ENCODE measurements at regions of chr4 and their contacts with region 1.

Region 1: GRCh38 chr4:24488399-24489164 is 95.8 kb downstream of the DHX15 start:
- ATAC-seq: peak; percentile 40 to 100 (median 80)
- H3K4me3 ChIP-seq: no peak overlapping the region
- H3K27ac ChIP-seq: no peak overlapping the region
- H3K4me1 ChIP-seq: no peaks in the 10 kb centered on the region

Region 2: GRCh38 chr4:24594891-24595290 is 106.3 kb after region 1 on chr4:
- in situ Hi-C with region 1: no loop called
- ATAC-seq: peak in 4 of 8 experiments; percentile 53 to 98 (median 81)
- H3K4me3 ChIP-seq: no peak overlapping the region
- H3K27ac ChIP-seq: no peak overlapping the region
- H3K4me1 ChIP-seq: no peaks in the 10 kb centered on the region

Region 3: DNA sequence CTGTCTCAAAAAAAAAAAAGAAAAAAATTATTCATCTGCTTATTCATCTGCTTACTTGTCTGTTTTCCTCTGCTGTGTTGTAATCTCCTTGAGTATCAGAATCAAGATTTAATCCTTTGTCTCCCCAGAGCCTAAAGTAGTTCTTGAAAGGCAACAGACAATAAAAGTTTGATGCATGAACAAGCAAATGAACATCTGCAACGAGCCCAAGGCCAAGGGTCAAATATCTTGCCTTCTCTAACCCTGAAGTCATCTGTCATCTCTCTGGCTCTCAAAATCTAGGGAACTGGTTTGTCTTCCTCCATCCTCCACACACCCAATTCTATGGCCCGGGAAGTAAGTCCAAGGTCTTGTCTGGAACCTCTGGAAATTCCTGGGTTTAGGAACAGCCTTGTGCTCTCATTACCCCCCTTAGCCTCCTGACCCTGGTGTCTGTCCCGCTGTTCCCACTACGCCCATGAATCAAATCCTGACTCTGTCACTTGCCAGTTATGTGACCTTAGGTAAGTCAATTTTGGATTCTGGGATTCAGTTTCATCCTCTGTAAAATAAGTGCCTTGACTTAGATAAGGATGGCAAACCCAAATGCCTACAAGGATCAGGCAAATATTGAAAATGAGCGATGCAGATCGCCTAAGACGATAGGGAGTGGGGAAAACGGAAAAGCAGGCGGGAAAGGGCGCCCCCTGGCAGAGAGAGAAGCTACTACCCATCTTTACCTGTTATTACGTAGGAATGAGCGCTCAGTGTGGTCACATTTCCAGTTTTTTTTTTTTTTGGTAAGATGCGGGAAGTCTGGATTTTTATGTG is 198.5 kb after region 1 on chr4:
- in situ Hi-C with region 1: loop called in 1 of 9 experiments (anchors 25 kb)
- ATAC-seq: peak in 2 of 8 experiments; percentile 50 to 85
- H3K4me3 ChIP-seq: no peak overlapping the region
- H3K27ac ChIP-seq: no peak overlapping the region
- H3K4me1 ChIP-seq: no peaks in the 10 kb centered on the region

Region 4: GRCh38 chr4:24980064-24980690 is 491.6 kb after region 1 on chr4:
- in situ Hi-C with region 1: loop called in 3 of 9 experiments (anchors 25 kb)
- ATAC-seq: peak in 7 of 8 experiments; percentile 36 to 83 (median 57)
- H3K4me3 ChIP-seq: peak overlapping the region in 3 of 5 donors; percentile 4 to 25 (median 7)
- H3K27ac ChIP-seq: no peak overlapping the region
- H3K4me1 ChIP-seq: peaks cover 0 to 10% of the 10 kb centered on the region in 2 donors

Measured in motor neuron (in vitro differentiated cells).